MCF 10A (cell line): ENCODE measurements at regions of chr11 and their contacts with region 1.

Region 1: DNA sequence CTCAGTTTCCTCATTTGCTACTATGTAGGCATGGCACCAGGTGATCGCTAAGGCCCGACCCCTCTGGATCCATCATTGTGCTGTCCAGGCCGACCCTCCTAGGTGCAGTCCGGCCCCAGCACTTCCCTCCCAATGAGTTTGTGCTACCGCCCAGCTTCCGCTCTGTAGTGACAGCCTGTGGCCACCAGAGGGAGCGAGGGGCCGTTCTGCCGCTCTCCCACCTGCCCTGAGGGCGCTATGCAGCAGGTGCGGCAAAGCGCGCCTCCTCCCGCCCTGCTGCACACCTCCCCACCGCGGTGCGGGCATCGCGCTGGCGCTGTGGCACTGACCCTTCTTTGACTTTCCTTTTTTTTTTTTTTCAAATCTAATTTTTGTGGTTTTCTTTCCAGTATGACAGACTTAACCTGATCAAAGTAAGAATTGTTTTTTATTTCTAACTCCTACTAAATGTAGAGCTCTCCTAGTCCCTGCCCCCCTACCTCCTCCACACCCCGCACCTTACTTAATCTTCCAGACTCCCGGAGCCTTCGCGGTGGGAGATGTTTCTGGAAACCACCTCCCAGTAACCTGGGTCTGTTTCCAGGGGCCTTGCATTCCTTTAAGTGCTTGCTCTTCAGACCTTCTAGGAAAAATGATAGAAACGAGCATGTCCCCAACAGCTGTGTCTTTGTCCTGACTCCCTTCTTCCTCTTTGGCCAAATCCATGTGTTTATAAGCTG is 73.7 kb downstream of the SCN3B start:
- DNase-seq: peak; percentile 68
- H3K4me3 Mint-ChIP-seq: no peak overlapping the region
- H3K27ac Mint-ChIP-seq: no peak overlapping the region
- H3K4me1 Mint-ChIP-seq: peaks cover 9% of the 10 kb centered on the region
- H3K27me3 Mint-ChIP-seq: peaks cover 49% of the 10 kb centered on the region
- CTCF ChIP-seq: peak; percentile 95

Region 2: GRCh38 chr11:123330071-123330470 is 250.6 kb before region 1 on chr11:
- CTCF ChIA-PET with region 1: no interaction called
- POLR2A ChIA-PET with region 1: no interaction called
- intact Hi-C with region 1: no loop called
- DNase-seq: peak; percentile 26
- H3K4me3 Mint-ChIP-seq: no peak overlapping the region
- H3K27ac Mint-ChIP-seq: no peak overlapping the region
- H3K4me1 Mint-ChIP-seq: no peaks in the 10 kb centered on the region
- H3K27me3 Mint-ChIP-seq: peaks cover 31% of the 10 kb centered on the region
- CTCF ChIP-seq: no peak

Region 3: GRCh38 chr11:123511037-123511870 is 69.5 kb before region 1 on chr11:
- CTCF ChIA-PET with region 1: interaction called, 91 read pairs
- POLR2A ChIA-PET with region 1: interaction called, 3 read pairs
- intact Hi-C with region 1: loop called (anchors 1 kb)
- DNase-seq: peak; percentile 90
- H3K4me3 Mint-ChIP-seq: no peak overlapping the region
- H3K27ac Mint-ChIP-seq: no peak overlapping the region
- H3K4me1 Mint-ChIP-seq: peaks cover 6% of the 10 kb centered on the region
- H3K27me3 Mint-ChIP-seq: peaks cover 37% of the 10 kb centered on the region
- CTCF ChIP-seq: peak; percentile 79

Region 4: GRCh38 chr11:123536690-123537437 is 43.9 kb before region 1 on chr11:
- CTCF ChIA-PET with region 1: interaction called, 13 read pairs
- POLR2A ChIA-PET with region 1: no interaction called
- intact Hi-C with region 1: no loop called
- DNase-seq: no peak
- H3K4me3 Mint-ChIP-seq: no peak overlapping the region
- H3K27ac Mint-ChIP-seq: no peak overlapping the region
- H3K4me1 Mint-ChIP-seq: no peaks in the 10 kb centered on the region
- H3K27me3 Mint-ChIP-seq: peaks cover 23% of the 10 kb centered on the region
- CTCF ChIP-seq: no peak

Region 5: GRCh38 chr11:123560006-123560405 is 20.7 kb before region 1 on chr11:
- CTCF ChIA-PET with region 1: interaction called, 14 read pairs
- POLR2A ChIA-PET with region 1: no interaction called
- intact Hi-C with region 1: no loop called
- DNase-seq: no peak
- H3K4me3 Mint-ChIP-seq: no peak overlapping the region
- H3K27ac Mint-ChIP-seq: no peak overlapping the region
- H3K4me1 Mint-ChIP-seq: no peaks in the 10 kb centered on the region
- H3K27me3 Mint-ChIP-seq: peaks cover 70% of the 10 kb centered on the region
- CTCF ChIP-seq: no peak

Region 6: GRCh38 chr11:123640677-123641494 is 60.2 kb after region 1 on chr11:
- CTCF ChIA-PET with region 1: interaction called, 11 read pairs
- POLR2A ChIA-PET with region 1: no interaction called
- intact Hi-C with region 1: loop called (anchors 1 kb)
- DNase-seq: peak; percentile 54
- H3K4me3 Mint-ChIP-seq: no peak overlapping the region
- H3K27ac Mint-ChIP-seq: no peak overlapping the region
- H3K4me1 Mint-ChIP-seq: peaks cover 5% of the 10 kb centered on the region
- H3K27me3 Mint-ChIP-seq: peaks cover 37% of the 10 kb centered on the region
- CTCF ChIP-seq: peak; percentile 97

Region 7: GRCh38 chr11:123696183-123696582 is 115.5 kb after region 1 on chr11:
- CTCF ChIA-PET with region 1: interaction called, 10 read pairs
- POLR2A ChIA-PET with region 1: no interaction called
- intact Hi-C with region 1: no loop called
- DNase-seq: peak; percentile 26
- H3K4me3 Mint-ChIP-seq: no peak overlapping the region
- H3K27ac Mint-ChIP-seq: no peak overlapping the region
- H3K4me1 Mint-ChIP-seq: no peaks in the 10 kb centered on the region
- H3K27me3 Mint-ChIP-seq: no peaks in the 10 kb centered on the region
- CTCF ChIP-seq: no peak